Panc1 (cell line): ENCODE measurements at regions of chr11 and their contacts with region 1.

Region 1: DNA sequence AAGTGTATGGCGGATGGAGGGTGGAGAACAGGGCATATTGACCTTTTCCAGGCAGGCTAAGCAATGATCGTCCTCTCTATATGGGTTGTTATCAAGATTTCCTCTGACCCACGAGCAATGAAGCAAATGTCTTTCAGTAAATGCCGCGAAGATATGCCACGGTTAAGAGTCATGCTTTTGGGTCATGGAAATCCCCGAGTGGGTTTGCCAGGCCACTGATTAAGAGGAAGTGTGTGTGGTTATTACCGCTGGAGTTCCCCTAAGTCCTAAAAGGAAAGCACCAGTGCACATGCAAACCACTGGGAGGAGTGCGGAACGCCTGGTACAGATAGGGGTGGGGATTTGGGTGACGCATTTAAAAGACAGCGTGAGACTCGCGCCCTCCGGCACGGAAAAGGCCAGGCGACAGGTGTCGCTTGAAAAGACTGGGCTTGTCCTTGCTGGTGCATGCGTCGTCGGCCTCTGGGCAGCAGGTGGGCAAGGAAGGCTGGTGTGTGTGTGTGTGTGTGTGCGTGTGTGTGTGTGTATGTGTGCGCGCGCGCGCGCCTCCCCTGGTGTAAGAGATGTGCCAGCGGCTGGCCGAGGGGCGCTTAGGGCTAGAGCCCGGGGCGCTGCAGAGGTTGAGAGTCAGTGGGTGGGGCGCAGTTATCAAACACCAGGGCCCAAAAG is at the start of gene BIRC3:
- DNase-seq: peak; percentile 97
- ATAC-seq: peak; percentile 88
- H3K4me3 ChIP-seq: peak within 1 kb of the TSS; percentile 57 to 81
- H3K27ac ChIP-seq: peak within 1 kb of the TSS; percentile 93
- H3K4me1 ChIP-seq: peaks cover 52% of the 10 kb centered on the region
- H3K27me3 ChIP-seq: no peaks in the 10 kb centered on the region
- CTCF ChIP-seq: peak; percentile 44
- total RNA-seq, gene BIRC3: 65.4 TPM

Region 2: DNA sequence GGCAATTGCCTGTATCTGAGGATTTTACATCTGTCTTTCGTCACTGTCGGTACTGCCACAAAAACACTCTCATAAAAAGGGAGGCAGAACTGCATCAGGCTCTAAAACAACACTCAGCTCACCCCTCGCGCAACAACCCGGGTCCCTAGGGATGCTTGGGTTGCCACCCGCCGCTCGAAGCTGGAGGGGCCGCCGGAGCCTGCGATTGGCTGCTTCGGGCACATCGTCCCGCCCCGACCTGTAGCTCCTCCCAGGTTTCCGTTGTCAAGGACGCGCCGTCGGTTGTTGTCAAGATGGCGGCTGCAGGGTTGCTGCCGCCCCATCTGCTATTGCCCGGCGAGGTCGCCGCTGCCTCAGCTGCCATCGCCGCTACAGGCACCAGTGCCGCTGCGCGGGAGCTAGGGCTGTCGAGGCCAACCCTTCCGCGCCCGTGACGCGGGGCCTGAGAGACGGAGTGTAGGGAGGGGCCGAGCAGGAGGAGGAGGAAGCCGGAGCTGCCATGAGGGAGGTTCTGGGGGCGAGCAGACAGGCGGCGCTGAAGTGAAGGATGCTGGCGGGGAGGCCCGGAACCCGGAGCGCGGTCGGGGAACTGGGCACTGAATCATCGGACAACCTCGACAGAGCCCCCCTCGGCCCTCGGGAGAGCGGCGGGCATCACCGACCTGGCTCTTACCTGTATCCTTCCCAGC is 402.4 kb before region 1 on chr11 and contains the start of gene CEP126:
- CTCF ChIA-PET with region 1: no interaction called
- POLR2A ChIA-PET with region 1: no interaction called
- in situ Hi-C with region 1: no loop called
- intact Hi-C with region 1: loop called (anchors 10 kb)
- DNase-seq: peak; percentile 81
- ATAC-seq: peak; percentile 97
- H3K4me3 ChIP-seq: peak within 1 kb of the TSS; percentile 79 to 82
- H3K27ac ChIP-seq: peak within 1 kb of the TSS; percentile 94
- H3K4me1 ChIP-seq: peaks cover 37% of the 10 kb centered on the region
- H3K27me3 ChIP-seq: no peaks in the 10 kb centered on the region
- CTCF ChIP-seq: peak; percentile 78
- total RNA-seq, gene CEP126: 6.6 TPM

Region 3: GRCh38 chr11:102287964-102288724 is 29.1 kb before region 1 on chr11:
- CTCF ChIA-PET with region 1: interaction called, 9 read pairs
- POLR2A ChIA-PET with region 1: interaction called, 11 read pairs
- in situ Hi-C with region 1: loop called (anchors 5 kb)
- intact Hi-C with region 1: loop called (anchors 2 kb)
- DNase-seq: peak; percentile 81
- ATAC-seq: peak; percentile 91
- H3K4me3 ChIP-seq: peak overlapping the region; percentile 18 to 47
- H3K27ac ChIP-seq: peak overlapping the region; percentile 95
- H3K4me1 ChIP-seq: peaks cover 46% of the 10 kb centered on the region
- H3K27me3 ChIP-seq: no peaks in the 10 kb centered on the region
- CTCF ChIP-seq: peak; percentile 86

Region 4: DNA sequence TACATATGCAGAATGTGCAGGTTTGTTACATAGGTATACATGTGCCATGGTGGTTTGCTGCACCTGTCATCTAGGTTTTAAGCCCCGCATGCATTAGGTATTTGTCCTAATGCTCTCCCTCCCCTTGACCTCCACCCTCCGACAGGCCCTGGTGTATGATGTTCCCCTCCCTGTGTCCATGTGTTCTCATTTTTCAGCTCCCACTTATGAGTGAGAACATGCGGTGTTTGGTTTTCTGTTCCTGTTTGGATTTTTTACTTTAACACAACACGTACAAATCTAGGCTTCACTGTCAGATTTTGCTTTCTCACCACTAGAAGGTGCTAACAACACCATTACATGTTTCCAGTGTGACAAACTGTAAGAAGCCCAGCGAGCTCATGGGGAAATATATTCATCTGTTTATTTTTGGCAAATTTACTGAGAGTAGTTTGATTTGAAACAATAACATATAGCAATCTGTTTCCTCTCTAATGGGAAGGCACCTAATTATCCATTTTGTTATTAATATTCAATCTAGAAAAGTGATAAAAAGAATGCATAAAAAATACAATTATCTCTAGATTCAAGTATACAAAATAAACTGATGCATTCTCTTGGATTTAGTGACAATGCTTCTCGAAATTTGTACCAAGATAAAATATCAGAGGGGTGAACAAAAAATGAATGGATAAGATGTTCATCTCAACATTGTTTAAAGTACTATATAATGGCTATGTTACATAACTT is 23.2 kb before region 1 on chr11:
- CTCF ChIA-PET with region 1: interaction called, 9 read pairs
- POLR2A ChIA-PET with region 1: interaction called, 11 read pairs
- in situ Hi-C with region 1: no loop called
- intact Hi-C with region 1: loop called (anchors 2 kb)
- DNase-seq: peak; percentile 69
- ATAC-seq: peak; percentile 77
- H3K4me3 ChIP-seq: no peak overlapping the region
- H3K27ac ChIP-seq: peak overlapping the region; percentile 95
- H3K4me1 ChIP-seq: peaks cover 48% of the 10 kb centered on the region
- H3K27me3 ChIP-seq: no peaks in the 10 kb centered on the region
- CTCF ChIP-seq: peak; percentile 93